ENCODE measurements at regions of chr20 and their contacts with region 1.

Region 1: GRCh38 chr20:51800060-51800794 is 2.1 kb downstream of the SALL4 start:
- DNase-seq: peak; percentile 84
- ATAC-seq: peak; percentile 78
- H3K4me3 Mint-ChIP-seq: no peak overlapping the region
- H3K27ac Mint-ChIP-seq: no peak overlapping the region
- H3K4me1 Mint-ChIP-seq: peaks cover 8% of the 10 kb centered on the region
- H3K27me3 Mint-ChIP-seq: peaks cover 55% of the 10 kb centered on the region

Region 2: DNA sequence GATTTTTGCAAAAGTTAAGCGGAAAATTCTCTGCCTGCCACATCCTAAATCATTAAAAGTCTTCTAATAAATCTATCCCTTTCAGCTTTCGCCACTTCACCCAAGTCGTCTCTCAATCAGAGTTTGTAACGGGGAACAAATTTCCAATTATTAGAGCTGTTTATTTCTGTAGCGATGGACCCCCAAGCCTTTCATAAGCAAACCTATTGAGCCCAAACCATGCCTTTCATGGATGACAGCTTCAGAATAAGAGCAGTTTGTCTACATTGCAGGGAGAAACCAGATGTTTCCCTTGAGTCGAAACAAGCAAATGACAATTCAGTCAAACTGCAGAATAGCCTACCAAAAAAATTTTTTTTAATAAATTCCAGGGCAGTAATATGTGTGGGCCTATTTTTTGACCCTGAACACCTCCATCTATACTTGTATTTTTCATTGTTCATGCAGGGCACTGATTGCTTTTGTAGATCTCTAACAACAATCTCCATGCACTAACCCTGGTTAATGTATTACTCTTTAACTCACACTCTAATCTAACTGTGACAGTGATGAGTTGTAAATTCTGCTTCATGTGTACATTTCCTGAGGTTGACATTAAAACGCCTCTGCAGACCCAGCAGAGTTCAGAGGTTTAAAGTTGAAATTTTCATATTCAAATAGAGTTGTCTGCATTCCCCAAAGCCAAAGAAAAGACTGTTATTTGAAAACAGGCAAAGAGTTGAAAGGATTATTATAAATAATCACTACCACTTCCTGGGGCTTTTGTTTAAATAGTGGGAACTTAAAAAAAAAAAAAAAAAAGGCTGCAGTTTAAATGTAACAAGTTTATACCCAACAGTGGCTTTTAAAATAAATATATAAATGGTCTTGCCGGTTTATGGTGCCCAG is 96.6 kb before region 1 on chr20:
- CTCF ChIA-PET with region 1: interaction called, 5 read pairs
- POLR2A ChIA-PET with region 1: no interaction called
- intact Hi-C with region 1: loop called in 1 of 2 experiments (anchors 5 kb)
- DNase-seq: no peak
- ATAC-seq: no peak
- H3K4me3 Mint-ChIP-seq: no peak overlapping the region
- H3K27ac Mint-ChIP-seq: no peak overlapping the region
- H3K4me1 Mint-ChIP-seq: no peaks in the 10 kb centered on the region
- H3K27me3 Mint-ChIP-seq: peaks cover 6% of the 10 kb centered on the region

Region 3: GRCh38 chr20:51767010-51767558 is 33.1 kb before region 1 on chr20:
- CTCF ChIA-PET with region 1: interaction called, 5 read pairs
- POLR2A ChIA-PET with region 1: no interaction called
- intact Hi-C with region 1: loop called in 1 of 2 experiments (anchors 2 kb)
- DNase-seq: peak; percentile 77
- ATAC-seq: peak; percentile 97
- H3K4me3 Mint-ChIP-seq: peak overlapping the region; percentile 46
- H3K27ac Mint-ChIP-seq: no peak overlapping the region
- H3K4me1 Mint-ChIP-seq: peaks cover 8% of the 10 kb centered on the region
- H3K27me3 Mint-ChIP-seq: peaks cover 29% of the 10 kb centered on the region

Region 4: GRCh38 chr20:51966291-51966971 is 166.2 kb after region 1 on chr20:
- CTCF ChIA-PET with region 1: no interaction called
- POLR2A ChIA-PET with region 1: no interaction called
- intact Hi-C with region 1: loop called in 1 of 2 experiments (anchors 1 kb)
- DNase-seq: peak; percentile 25
- ATAC-seq: no peak
- H3K4me3 Mint-ChIP-seq: no peak overlapping the region
- H3K27ac Mint-ChIP-seq: no peak overlapping the region
- H3K4me1 Mint-ChIP-seq: no peaks in the 10 kb centered on the region
- H3K27me3 Mint-ChIP-seq: peaks cover 3% of the 10 kb centered on the region